Activated CD4-positive, alpha-beta T cell treated with anti-CD3 and anti-CD28 coated beads for 36 hours (primary cell): ENCODE measurements at regions of chr13 and their contacts with region 1.

Region 1: GRCh38 chr13:109786457-109787134 is at the start of gene IRS2:
- DNase-seq: peak; percentile 95
- ATAC-seq: peak; percentile 91
- H3K4me3 Mint-ChIP-seq: peak within 1 kb of the TSS; percentile 74
- H3K27ac Mint-ChIP-seq: peak within 1 kb of the TSS; percentile 69
- H3K4me1 Mint-ChIP-seq: peaks cover 18% of the 10 kb centered on the region
- H3K27me3 Mint-ChIP-seq: no peaks in the 10 kb centered on the region
- total RNA-seq, gene IRS2: 1.4 to 1.5 TPM

Region 2: DNA sequence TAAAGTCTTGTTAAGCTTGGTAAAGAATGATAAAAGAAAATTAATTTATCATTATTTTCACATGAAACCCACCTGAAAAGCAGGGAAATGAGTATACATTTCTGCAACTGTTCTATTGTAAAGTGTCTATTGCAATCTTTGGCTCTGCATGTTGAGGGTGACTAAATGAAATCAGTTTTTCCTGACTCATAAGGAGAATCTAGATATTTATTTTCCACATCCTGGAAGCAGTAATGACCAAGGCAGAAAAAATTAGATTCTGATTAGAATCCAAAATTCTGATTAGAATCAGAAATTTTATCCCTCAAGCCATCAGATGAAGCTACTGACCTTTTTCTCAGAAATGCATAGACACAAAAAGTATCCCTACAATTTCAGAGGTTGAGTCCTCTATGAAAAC is 978.8 kb before region 1 on chr13:
- CTCF ChIA-PET with region 1: no interaction called
- POLR2A ChIA-PET with region 1: no interaction called
- intact Hi-C with region 1: no loop called
- DNase-seq: no peak
- ATAC-seq: no peak
- H3K4me3 Mint-ChIP-seq: no peak overlapping the region
- H3K27ac Mint-ChIP-seq: no peak overlapping the region
- H3K4me1 Mint-ChIP-seq: no peaks in the 10 kb centered on the region
- H3K27me3 Mint-ChIP-seq: peaks cover 4% of the 10 kb centered on the region

Region 3: DNA sequence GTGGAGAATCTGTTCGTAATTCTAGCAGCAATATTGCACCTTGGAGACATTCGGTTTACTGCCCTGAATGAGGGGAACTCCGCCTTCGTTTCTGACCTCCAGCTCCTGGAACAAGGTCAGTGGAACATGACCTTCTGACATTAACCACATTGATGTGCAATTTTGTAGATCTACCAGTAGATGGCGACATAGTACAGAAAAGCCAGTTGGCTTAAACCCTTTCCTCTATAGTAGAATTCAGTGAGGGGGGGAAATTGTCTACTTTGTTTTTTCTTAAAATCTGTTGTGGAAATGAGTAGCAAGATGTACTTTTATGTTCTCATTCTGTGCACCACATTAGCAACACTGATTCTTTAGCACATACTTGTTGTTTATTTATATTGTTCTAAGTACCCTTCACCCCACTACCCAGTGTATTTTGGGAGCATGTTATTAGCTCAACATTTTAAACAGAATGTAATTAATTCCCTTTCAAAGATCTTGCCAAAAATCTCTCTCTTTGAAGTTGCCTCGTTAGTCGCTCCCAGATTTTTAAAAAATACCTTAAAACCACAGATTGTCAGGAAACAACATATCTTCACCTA is 825.0 kb before region 1 on chr13:
- CTCF ChIA-PET with region 1: interaction called, 3 read pairs
- POLR2A ChIA-PET with region 1: no interaction called
- intact Hi-C with region 1: loop called (anchors 2 kb)
- DNase-seq: peak; percentile 16
- ATAC-seq: peak; percentile 66
- H3K4me3 Mint-ChIP-seq: no peak overlapping the region
- H3K27ac Mint-ChIP-seq: no peak overlapping the region
- H3K4me1 Mint-ChIP-seq: no peaks in the 10 kb centered on the region
- H3K27me3 Mint-ChIP-seq: peaks cover 5% of the 10 kb centered on the region

Region 4: GRCh38 chr13:109610517-109610916 is 176.1 kb before region 1 on chr13:
- CTCF ChIA-PET with region 1: no interaction called
- POLR2A ChIA-PET with region 1: no interaction called
- intact Hi-C with region 1: loop called (anchors 1 to 2 kb)
- DNase-seq: peak; percentile 56
- ATAC-seq: peak; percentile 30
- H3K4me3 Mint-ChIP-seq: no peak overlapping the region
- H3K27ac Mint-ChIP-seq: no peak overlapping the region
- H3K4me1 Mint-ChIP-seq: no peaks in the 10 kb centered on the region
- H3K27me3 Mint-ChIP-seq: no peaks in the 10 kb centered on the region

Region 5: GRCh38 chr13:110412132-110412914 is 625.7 kb after region 1 on chr13:
- CTCF ChIA-PET with region 1: no interaction called
- POLR2A ChIA-PET with region 1: no interaction called
- intact Hi-C with region 1: loop called in 1 of 2 experiments (anchors 10 kb)
- DNase-seq: peak; percentile 87
- ATAC-seq: peak; percentile 86
- H3K4me3 Mint-ChIP-seq: no peak overlapping the region
- H3K27ac Mint-ChIP-seq: no peak overlapping the region
- H3K4me1 Mint-ChIP-seq: peaks cover 7% of the 10 kb centered on the region
- H3K27me3 Mint-ChIP-seq: peaks cover 71% of the 10 kb centered on the region

Region 6: DNA sequence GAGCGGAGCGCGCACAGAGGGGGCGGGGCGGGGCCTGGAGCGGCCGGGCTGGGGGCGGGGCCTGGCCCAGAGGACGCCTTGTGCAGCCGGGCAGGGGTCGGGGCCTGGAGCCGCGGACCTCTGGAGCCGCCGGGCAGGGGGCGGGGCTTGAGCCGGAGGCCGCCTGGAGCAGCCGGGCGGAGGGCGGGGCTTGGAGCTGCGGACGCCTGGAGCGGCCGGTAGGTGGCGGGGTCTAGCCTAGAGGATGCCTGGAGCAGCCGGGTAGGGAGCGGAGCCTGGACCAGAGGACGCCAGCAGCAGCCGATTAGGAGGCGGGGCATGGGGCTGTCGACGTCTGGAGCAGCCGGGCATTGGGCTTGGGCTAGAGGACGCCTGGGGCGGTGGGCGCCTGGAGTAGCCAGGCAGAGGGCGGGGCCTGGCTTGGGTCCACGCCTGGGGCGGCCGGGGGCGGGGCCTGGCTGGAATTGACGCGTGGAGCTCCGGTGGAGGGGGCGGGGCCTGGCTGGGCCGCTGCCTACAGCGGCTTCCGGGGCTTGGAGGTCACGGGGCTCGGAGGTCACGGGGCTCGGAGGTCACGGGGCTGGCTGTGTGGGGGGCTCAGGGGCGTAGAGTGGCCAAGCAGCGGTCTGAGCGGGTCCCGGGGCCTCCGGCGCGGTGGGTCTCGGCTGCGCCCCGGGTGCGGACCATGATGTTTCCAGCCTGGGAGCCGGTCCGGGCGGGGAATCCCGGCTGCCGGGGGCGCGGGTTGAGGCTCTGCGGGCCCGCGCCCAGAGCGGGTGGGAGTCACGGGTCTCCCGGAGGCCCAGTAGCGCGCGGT is 1128.7 kb after region 1 on chr13 and contains the start of gene ANKRD10:
- CTCF ChIA-PET with region 1: no interaction called
- POLR2A ChIA-PET with region 1: no interaction called
- intact Hi-C with region 1: loop called in 1 of 2 experiments (anchors 2 kb)
- DNase-seq: peak; percentile 98
- ATAC-seq: peak; percentile 84
- H3K4me3 Mint-ChIP-seq: peak within 1 kb of the TSS; percentile 92
- H3K27ac Mint-ChIP-seq: peak within 1 kb of the TSS; percentile 93
- H3K4me1 Mint-ChIP-seq: peaks cover 39% of the 10 kb centered on the region
- H3K27me3 Mint-ChIP-seq: no peaks in the 10 kb centered on the region
- total RNA-seq, gene ANKRD10: 65.1 to 91.8 TPM